Activated B cell treated with CpG ODN at 0.5 μM for 24 hours (primary cell): ENCODE measurements at regions of chr14 and their contacts with region 1.

Region 1: GRCh38 chr14:89779712-89780111 is 174.8 kb downstream of the EFCAB11 start:
- DNase-seq: no peak
- ATAC-seq: no peak
- H3K4me3 Mint-ChIP-seq: no peak overlapping the region
- H3K27ac Mint-ChIP-seq: no peak overlapping the region
- H3K4me1 Mint-ChIP-seq: peaks cover 3% of the 10 kb centered on the region
- H3K27me3 Mint-ChIP-seq: peaks cover 1% of the 10 kb centered on the region
- CTCF ChIP-seq: no peak

Region 2: GRCh38 chr14:89630101-89630829 is 149.4 kb before region 1 on chr14:
- CTCF ChIA-PET with region 1: no interaction called
- POLR2A ChIA-PET with region 1: interaction called, 13 read pairs
- intact Hi-C with region 1: no loop called
- DNase-seq: no peak
- ATAC-seq: no peak
- H3K4me3 Mint-ChIP-seq: no peak overlapping the region
- H3K27ac Mint-ChIP-seq: no peak overlapping the region
- H3K4me1 Mint-ChIP-seq: peaks cover 28% of the 10 kb centered on the region
- H3K27me3 Mint-ChIP-seq: no peaks in the 10 kb centered on the region
- CTCF ChIP-seq: no peak